Calu3 (cell line): ENCODE measurements at regions of chr15 and their contacts with region 1.

Region 1: GRCh38 chr15:98311566-98312188 is 336.7 kb upstream of the IGF1R start:
- DNase-seq: peak; percentile 82
- H3K4me3 Mint-ChIP-seq: no peak overlapping the region
- H3K27ac Mint-ChIP-seq: no peak overlapping the region
- H3K4me1 Mint-ChIP-seq: no peaks in the 10 kb centered on the region
- H3K27me3 Mint-ChIP-seq: peaks cover 45% of the 10 kb centered on the region
- CTCF ChIP-seq: peak; percentile 77

Region 2: GRCh38 chr15:98241030-98241554 is 70.6 kb before region 1 on chr15:
- CTCF ChIA-PET with region 1: no interaction called
- intact Hi-C with region 1: no loop called
- DNase-seq: no peak
- H3K4me3 Mint-ChIP-seq: no peak overlapping the region
- H3K27ac Mint-ChIP-seq: no peak overlapping the region
- H3K4me1 Mint-ChIP-seq: no peaks in the 10 kb centered on the region
- H3K27me3 Mint-ChIP-seq: no peaks in the 10 kb centered on the region
- CTCF ChIP-seq: no peak

Region 3: GRCh38 chr15:98421419-98422129 is 109.9 kb after region 1 on chr15:
- CTCF ChIA-PET with region 1: interaction called, 10 read pairs
- intact Hi-C with region 1: loop called (anchors 1 kb)
- DNase-seq: peak; percentile 80
- H3K4me3 Mint-ChIP-seq: no peak overlapping the region
- H3K27ac Mint-ChIP-seq: no peak overlapping the region
- H3K4me1 Mint-ChIP-seq: no peaks in the 10 kb centered on the region
- H3K27me3 Mint-ChIP-seq: peaks cover 73% of the 10 kb centered on the region
- CTCF ChIP-seq: peak; percentile 98

Region 4: GRCh38 chr15:98428253-98428989 is 116.7 kb after region 1 on chr15:
- CTCF ChIA-PET with region 1: interaction called, 15 read pairs
- intact Hi-C with region 1: no loop called
- DNase-seq: peak; percentile 91
- H3K4me3 Mint-ChIP-seq: peak overlapping the region; percentile 66
- H3K27ac Mint-ChIP-seq: no peak overlapping the region
- H3K4me1 Mint-ChIP-seq: no peaks in the 10 kb centered on the region
- H3K27me3 Mint-ChIP-seq: peaks cover 40% of the 10 kb centered on the region
- CTCF ChIP-seq: peak; percentile 90